ENCODE measurements at regions of chr6 and their contacts with region 1.

Region 1: GRCh38 chr6:122491919-122492555 is 20.4 kb upstream of the SERINC1 start:
- DNase-seq: peak; percentile 27
- ATAC-seq: peak; percentile 100
- H3K4me3 Mint-ChIP-seq: peak overlapping the region; percentile 3
- H3K27ac Mint-ChIP-seq: no peak overlapping the region
- H3K4me1 Mint-ChIP-seq: peaks cover 12% of the 10 kb centered on the region
- H3K27me3 Mint-ChIP-seq: peaks cover under 1% of the 10 kb centered on the region
- CTCF ChIP-seq: no peak

Region 2: GRCh38 chr6:122839477-122839876 is 347.4 kb after region 1 on chr6:
- CTCF ChIA-PET with region 1: interaction called, 10 read pairs
- POLR2A ChIA-PET with region 1: no interaction called
- intact Hi-C with region 1: loop called (anchors 1 kb)
- DNase-seq: no peak
- ATAC-seq: peak; percentile 58
- H3K4me3 Mint-ChIP-seq: no peak overlapping the region
- H3K27ac Mint-ChIP-seq: no peak overlapping the region
- H3K4me1 Mint-ChIP-seq: no peaks in the 10 kb centered on the region
- H3K27me3 Mint-ChIP-seq: peaks cover 7% of the 10 kb centered on the region
- CTCF ChIP-seq: no peak

Measured in activated B cell treated with CpG ODN at 0.5 μM for 24 hours (primary cell).